WTC11 (cell line): ENCODE measurements at regions of chr9 and their contacts with region 1.

Region 1: GRCh38 chr9:22244141-22245011 is 202.2 kb upstream of the DMRTA1 start:
- DNase-seq: peak; percentile 55
- ATAC-seq: peak; percentile 77
- H3K4me3 Mint-ChIP-seq: no peak overlapping the region
- H3K27ac Mint-ChIP-seq: no peak overlapping the region
- H3K4me1 Mint-ChIP-seq: no peaks in the 10 kb centered on the region
- H3K27me3 Mint-ChIP-seq: no peaks in the 10 kb centered on the region
- CTCF ChIP-seq: no peak; the same call in 1 of the 2 replicates

Region 2: DNA sequence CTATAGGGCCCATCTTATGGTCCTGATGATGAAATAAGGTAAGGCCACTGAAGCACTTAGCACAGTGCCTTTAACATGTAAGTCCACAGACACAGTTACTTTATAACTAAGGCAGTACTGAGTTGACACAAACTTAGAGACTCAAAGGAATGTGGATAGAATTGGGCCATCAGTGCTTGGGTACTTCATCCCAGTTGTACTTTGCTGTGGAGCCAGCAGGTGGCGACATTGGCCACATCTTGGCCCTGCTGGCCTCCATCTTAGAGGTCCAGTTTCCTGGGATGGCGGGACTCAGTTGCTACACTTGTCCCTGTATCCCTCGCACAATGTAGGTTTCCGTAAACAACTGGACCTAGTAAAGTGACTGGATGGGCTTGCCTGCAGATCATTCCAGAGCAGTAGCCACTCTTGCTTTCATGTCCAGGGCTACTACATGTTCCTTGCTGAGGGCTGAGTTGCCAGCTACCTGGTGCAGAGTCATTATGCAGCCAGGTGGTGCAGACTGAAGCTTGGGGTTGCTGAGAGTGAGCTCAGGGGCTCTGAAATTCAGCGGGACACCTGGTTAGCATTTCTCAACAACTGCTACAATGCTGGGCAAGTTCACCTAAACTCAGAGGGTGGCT is 431.3 kb before region 1 on chr9:
- CTCF ChIA-PET with region 1: interaction called, 10 read pairs
- POLR2A ChIA-PET with region 1: no interaction called
- DNase-seq: peak; percentile 73
- ATAC-seq: peak; percentile 75
- H3K4me3 Mint-ChIP-seq: no peak overlapping the region
- H3K27ac Mint-ChIP-seq: no peak overlapping the region
- H3K4me1 Mint-ChIP-seq: peaks cover 3% of the 10 kb centered on the region
- H3K27me3 Mint-ChIP-seq: no peaks in the 10 kb centered on the region
- CTCF ChIP-seq: peak; percentile 91

Region 3: DNA sequence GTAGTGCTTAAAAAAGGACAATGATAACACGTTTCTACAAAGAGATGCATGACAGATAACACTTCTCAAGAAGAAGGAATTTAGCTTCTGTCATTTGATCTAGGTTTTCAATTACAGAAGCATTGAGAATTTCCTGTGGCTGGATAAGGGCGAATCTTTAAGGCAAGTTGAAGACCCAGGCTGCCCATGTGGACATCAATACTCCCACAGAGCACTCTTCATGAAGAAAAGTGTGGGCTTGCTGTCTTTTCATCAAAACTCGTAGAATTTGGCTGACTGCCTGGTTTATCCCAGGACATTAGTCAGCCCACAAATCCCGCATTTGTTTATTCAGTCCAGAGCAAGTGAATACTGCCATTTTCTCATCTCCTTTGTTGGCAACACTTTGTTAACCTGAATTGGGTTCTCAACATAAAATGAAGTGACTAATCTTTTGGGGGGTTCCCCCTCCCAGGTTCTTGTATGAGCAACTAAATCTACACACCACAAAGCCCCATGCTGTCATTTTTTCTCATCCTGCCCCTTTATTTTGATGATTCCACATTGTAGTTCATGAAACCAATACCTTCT is 191.9 kb before region 1 on chr9:
- CTCF ChIA-PET with region 1: interaction called, 13 read pairs
- POLR2A ChIA-PET with region 1: no interaction called
- DNase-seq: no peak
- ATAC-seq: no peak
- H3K4me3 Mint-ChIP-seq: no peak overlapping the region
- H3K27ac Mint-ChIP-seq: no peak overlapping the region
- H3K4me1 Mint-ChIP-seq: peaks cover 5% of the 10 kb centered on the region; the same call in 1 of the 2 replicates
- H3K27me3 Mint-ChIP-seq: no peaks in the 10 kb centered on the region
- CTCF ChIP-seq: no peak

Region 4: GRCh38 chr9:22119537-22120158 is 124.7 kb before region 1 on chr9:
- CTCF ChIA-PET with region 1: interaction called, 11 read pairs
- POLR2A ChIA-PET with region 1: no interaction called
- DNase-seq: no peak
- ATAC-seq: peak; percentile 69
- H3K4me3 Mint-ChIP-seq: no peak overlapping the region
- H3K27ac Mint-ChIP-seq: no peak overlapping the region
- H3K4me1 Mint-ChIP-seq: peaks cover 19% of the 10 kb centered on the region
- H3K27me3 Mint-ChIP-seq: no peaks in the 10 kb centered on the region; the same call in 1 of the 2 replicates
- CTCF ChIP-seq: no peak

Region 5: DNA sequence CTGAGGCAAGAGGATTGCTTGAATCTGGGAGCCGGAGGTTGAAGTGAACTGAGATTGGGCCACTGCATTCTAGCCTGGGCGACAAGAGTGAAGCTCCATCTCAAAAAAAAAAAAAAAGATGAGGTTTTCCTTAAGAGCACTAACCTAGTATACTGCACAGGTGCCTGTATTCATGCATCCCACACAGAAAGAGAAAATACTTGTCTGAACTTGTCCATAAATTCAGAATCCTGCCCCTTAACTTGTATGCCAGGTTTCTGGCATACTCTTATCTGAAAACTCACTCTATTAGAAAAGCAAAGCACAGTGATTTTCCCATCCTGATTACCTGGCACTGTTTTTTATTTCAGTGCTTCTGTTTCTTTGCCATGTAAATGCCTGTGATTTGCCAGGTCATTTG is 110.0 kb before region 1 on chr9:
- CTCF ChIA-PET with region 1: no interaction called
- POLR2A ChIA-PET with region 1: no interaction called
- DNase-seq: no peak
- ATAC-seq: no peak
- H3K4me3 Mint-ChIP-seq: no peak overlapping the region
- H3K27ac Mint-ChIP-seq: no peak overlapping the region
- H3K4me1 Mint-ChIP-seq: peaks cover 3% of the 10 kb centered on the region
- H3K27me3 Mint-ChIP-seq: no peaks in the 10 kb centered on the region
- CTCF ChIP-seq: no peak

Region 6: DNA sequence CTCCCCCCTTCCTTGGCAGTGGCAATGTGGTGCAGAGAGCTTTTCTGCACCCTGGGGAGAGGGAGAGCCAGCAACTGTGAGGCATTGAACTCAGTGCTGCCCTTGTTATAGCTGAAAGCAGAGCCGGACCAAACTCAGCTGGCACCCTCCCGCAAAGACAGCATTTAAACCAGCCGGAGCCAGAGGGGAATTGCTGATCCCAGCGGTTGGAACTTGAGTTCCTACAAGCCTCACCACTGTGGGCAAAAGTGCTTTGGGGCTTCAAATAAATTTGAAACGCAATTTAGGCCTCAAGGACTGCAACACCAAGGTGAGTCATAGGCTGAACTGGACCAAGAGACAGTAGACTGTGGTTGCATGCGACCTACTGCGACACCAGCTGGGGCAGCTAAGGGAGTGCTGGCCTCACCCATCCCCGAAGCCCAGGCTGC is 27.6 kb before region 1 on chr9:
- CTCF ChIA-PET with region 1: interaction called, 10 read pairs
- POLR2A ChIA-PET with region 1: no interaction called
- DNase-seq: no peak
- ATAC-seq: peak; percentile 61
- H3K4me3 Mint-ChIP-seq: no peak overlapping the region
- H3K27ac Mint-ChIP-seq: no peak overlapping the region
- H3K4me1 Mint-ChIP-seq: peaks cover 9% of the 10 kb centered on the region
- H3K27me3 Mint-ChIP-seq: no peaks in the 10 kb centered on the region; the same call in 1 of the 2 replicates
- CTCF ChIP-seq: no peak

Region 7: GRCh38 chr9:22452415-22453010 is 208.1 kb after region 1 on chr9:
- CTCF ChIA-PET with region 1: interaction called, 26 read pairs
- POLR2A ChIA-PET with region 1: no interaction called
- DNase-seq: peak; percentile 39
- ATAC-seq: peak; percentile 29; the same call in 1 of the 2 replicates
- H3K4me3 Mint-ChIP-seq: no peak overlapping the region
- H3K27ac Mint-ChIP-seq: no peak overlapping the region
- H3K4me1 Mint-ChIP-seq: peaks cover 14% of the 10 kb centered on the region
- H3K27me3 Mint-ChIP-seq: no peaks in the 10 kb centered on the region
- CTCF ChIP-seq: peak; percentile 68; the same call in 1 of the 2 replicates